ENCODE measurements at regions of chr11 and their contacts with region 1.

Region 1: GRCh38 chr11:62726915-62727763 is at the start of gene HNRNPUL2:
- DNase-seq: peak; percentile 97
- ATAC-seq: peak; percentile 89
- H3K4me3 ChIP-seq: peak within 1 kb of the TSS; percentile 91 to 100 (median 94)
- H3K27ac ChIP-seq: peak within 1 kb of the TSS; percentile 99
- H3K4me1 ChIP-seq: peaks cover 46% of the 10 kb centered on the region
- H3K27me3 ChIP-seq: peaks cover 0 to 3% of the 10 kb centered on the region in 2 experiments; a peak in 1 of 5 replicates
- CTCF ChIP-seq: peak; percentile 33
- EP300 ChIP-seq: no peak
- POLR2A ChIP-seq: peak; percentile 87 to 91
- RAD21 ChIP-seq: peak; percentile 53; the same call in 1 of the 2 replicates
- total RNA-seq, gene HNRNPUL2: 8.4 and 9.6 TPM in 2 replicates

Region 2: GRCh38 chr11:62573592-62574362 is 153.4 kb before region 1 on chr11 and contains the start of gene EEF1G:
- CTCF ChIA-PET with region 1: no interaction called
- POLR2A ChIA-PET with region 1: interaction called, 10 read pairs
- in situ Hi-C with region 1: no loop called
- intact Hi-C with region 1: no loop called
- DNase-seq: peak; percentile 99
- ATAC-seq: peak; percentile 93
- H3K4me3 ChIP-seq: peak within 1 kb of the TSS; percentile 80 to 96 (median 95)
- H3K27ac ChIP-seq: peak within 1 kb of the TSS; percentile 85
- H3K4me1 ChIP-seq: peaks cover 63% of the 10 kb centered on the region
- H3K27me3 ChIP-seq: no peaks in the 10 kb centered on the region; a peak in 1 of 5 replicates
- CTCF ChIP-seq: no peak; the same call in 1 of the 2 replicates
- EP300 ChIP-seq: no peak
- POLR2A ChIP-seq: peak; percentile 89 to 91
- RAD21 ChIP-seq: no peak
- total RNA-seq, gene EEF1G: 1,787 and 2,092 TPM in 2 replicates

Region 3: DNA sequence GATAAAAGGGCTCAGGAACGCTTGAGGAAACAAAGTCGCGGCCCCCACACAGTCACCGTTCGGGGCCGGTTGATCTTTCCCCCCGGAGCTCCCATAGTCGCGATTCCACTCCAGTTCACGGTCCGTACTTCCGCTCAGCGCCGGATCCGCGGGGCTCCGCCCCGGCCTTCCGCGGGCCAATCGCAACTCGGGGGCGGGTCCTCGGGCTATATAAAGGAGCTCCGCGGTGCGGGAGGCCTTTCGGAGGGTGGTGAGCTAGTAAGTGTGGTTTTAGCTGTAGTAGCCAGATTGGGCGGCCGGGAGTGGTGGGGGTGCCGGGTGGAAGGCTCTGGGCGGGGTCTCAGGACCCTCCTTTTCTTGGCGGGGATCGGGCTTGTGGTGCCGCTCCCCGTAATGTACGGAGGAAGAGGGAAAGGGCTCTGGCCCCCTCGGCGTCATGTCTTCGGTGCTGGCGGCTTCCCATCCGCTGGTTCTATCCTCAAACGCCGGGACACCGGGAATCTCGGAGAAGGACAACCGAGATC is 62.0 kb before region 1 on chr11 and contains the starts of genes C11orf98 and CSKMT:
- CTCF ChIA-PET with region 1: no interaction called
- POLR2A ChIA-PET with region 1: interaction called, 43 read pairs
- in situ Hi-C with region 1: no loop called
- intact Hi-C with region 1: no loop called
- DNase-seq: peak; percentile 85
- ATAC-seq: peak; percentile 86
- H3K4me3 ChIP-seq: peak within 1 kb of the TSS; percentile 69 to 97 (median 91)
- H3K27ac ChIP-seq: peak within 1 kb of the TSS; percentile 84
- H3K4me1 ChIP-seq: peaks cover 47% of the 10 kb centered on the region
- H3K27me3 ChIP-seq: no peaks in the 10 kb centered on the region; a peak in 1 of 5 replicates
- CTCF ChIP-seq: no peak
- EP300 ChIP-seq: peak in 1 of 2 experiments; percentile 11; a peak in 2 of 4 replicates
- POLR2A ChIP-seq: peak; percentile 97 to 99
- RAD21 ChIP-seq: peak; percentile 55
- total RNA-seq, gene C11orf98: 91.8 and 109 TPM in 2 replicates
- total RNA-seq, gene CSKMT: 9.9 and 31.8 TPM in 2 replicates

Region 4: GRCh38 chr11:62705880-62706849 is 21.0 kb before region 1 on chr11:
- CTCF ChIA-PET with region 1: no interaction called
- POLR2A ChIA-PET with region 1: interaction called, 27 read pairs
- in situ Hi-C with region 1: no loop called
- intact Hi-C with region 1: no loop called
- DNase-seq: peak; percentile 83
- ATAC-seq: peak; percentile 93
- H3K4me3 ChIP-seq: peak overlapping the region; percentile 70 to 86 (median 80)
- H3K27ac ChIP-seq: peak overlapping the region; percentile 69
- H3K4me1 ChIP-seq: peaks cover 18% of the 10 kb centered on the region
- H3K27me3 ChIP-seq: no peaks in the 10 kb centered on the region
- CTCF ChIP-seq: no peak
- EP300 ChIP-seq: no peak
- POLR2A ChIP-seq: peak in 1 of 2 experiments; percentile 74; a peak in 2 of 4 replicates
- RAD21 ChIP-seq: no peak

Region 5: GRCh38 chr11:62771144-62772021 is 44.2 kb after region 1 on chr11 and contains the start of gene TAF6L:
- CTCF ChIA-PET with region 1: no interaction called
- POLR2A ChIA-PET with region 1: interaction called, 24 read pairs
- in situ Hi-C with region 1: no loop called
- intact Hi-C with region 1: loop called (anchors 1 kb)
- DNase-seq: peak; percentile 97
- ATAC-seq: peak; percentile 93
- H3K4me3 ChIP-seq: peak within 1 kb of the TSS; percentile 64 to 78 (median 65)
- H3K27ac ChIP-seq: peak within 1 kb of the TSS; percentile 92
- H3K4me1 ChIP-seq: peaks cover 23% of the 10 kb centered on the region
- H3K27me3 ChIP-seq: no peaks in the 10 kb centered on the region; a peak in 1 of 5 replicates
- CTCF ChIP-seq: 0 out of 2 replicates have a peak, but pooled peaks have one; percentile 8
- EP300 ChIP-seq: no peak
- POLR2A ChIP-seq: peak; percentile 60 to 88; a peak in 3 of 4 replicates
- RAD21 ChIP-seq: no peak; the same call in 1 of the 2 replicates
- total RNA-seq, gene TAF6L: 13.4 and 19.4 TPM in 2 replicates

Region 6: GRCh38 chr11:62855571-62856332 is 128.6 kb after region 1 on chr11:
- CTCF ChIA-PET with region 1: no interaction called
- POLR2A ChIA-PET with region 1: interaction called, 31 read pairs
- in situ Hi-C with region 1: no loop called
- intact Hi-C with region 1: loop called (anchors 5 kb)
- DNase-seq: peak; percentile 97
- ATAC-seq: peak; percentile 79
- H3K4me3 ChIP-seq: peak overlapping the region; percentile 86 to 96 (median 94)
- H3K27ac ChIP-seq: peak overlapping the region; percentile 91
- H3K4me1 ChIP-seq: peaks cover 77% of the 10 kb centered on the region
- H3K27me3 ChIP-seq: no peaks in the 10 kb centered on the region; a peak in 1 of 5 replicates
- CTCF ChIP-seq: peak; percentile 23; the same call in 1 of the 2 replicates
- EP300 ChIP-seq: 0 out of 4 replicates have a peak, but pooled peaks of 1 of the 2 experiments have one; percentile 8
- POLR2A ChIP-seq: peak; percentile 99 to 100
- RAD21 ChIP-seq: peak; percentile 16; the same call in 1 of the 2 replicates

Measured in HepG2 (cell line).